ENCODE measurements at regions of chr1 and their contacts with region 1.

Region 1: DNA sequence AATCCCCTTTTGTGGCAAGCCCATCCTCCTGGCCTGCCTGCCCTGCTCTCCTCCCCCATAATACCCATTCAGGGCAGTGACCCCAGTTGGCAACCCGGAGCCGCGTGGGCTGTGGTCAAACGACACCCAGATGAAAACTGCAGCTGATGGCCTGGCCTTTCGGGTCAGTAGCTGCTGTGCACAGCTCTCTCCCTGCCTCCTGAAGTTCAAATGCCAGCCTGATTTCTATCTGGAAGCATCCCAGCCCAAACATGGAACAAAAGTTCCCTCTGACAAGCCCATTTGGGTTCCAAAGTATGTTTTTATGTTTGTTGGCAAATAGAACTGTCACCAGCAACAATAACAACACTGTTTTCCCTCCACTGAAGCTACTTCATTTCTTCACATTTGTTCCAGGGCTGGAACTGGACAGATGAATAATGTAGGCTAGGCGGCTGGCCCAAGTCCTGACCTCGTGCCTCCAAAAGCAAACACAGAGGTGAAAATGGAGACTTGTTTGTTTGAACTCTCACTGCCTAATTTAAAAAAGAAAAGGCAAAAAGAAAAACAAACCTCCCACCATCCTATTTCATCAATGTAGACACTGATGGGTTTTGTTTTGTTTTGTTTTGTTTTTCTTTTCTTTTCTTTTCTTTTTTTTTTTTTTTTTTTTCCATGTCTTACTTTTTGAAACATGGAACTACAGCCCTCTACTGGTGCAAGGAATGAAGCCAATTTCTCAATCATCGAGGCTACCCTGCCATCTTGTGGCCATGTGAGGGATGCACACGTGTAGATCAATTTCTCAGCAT is 179.0 kb downstream of the ADSS2 start:
- DNase-seq: peak; percentile 42 to 87 (median 71)
- ATAC-seq: peak; percentile 97
- H3K4me3 ChIP-seq: no peak overlapping the region
- H3K4me3 Mint-ChIP-seq: no peak overlapping the region
- H3K27ac ChIP-seq: no peak overlapping the region
- H3K27ac Mint-ChIP-seq: no peak overlapping the region
- H3K4me1 ChIP-seq: no peaks in the 10 kb centered on the region
- H3K4me1 Mint-ChIP-seq: peaks cover 12% of the 10 kb centered on the region
- H3K27me3 ChIP-seq: no peaks in the 10 kb centered on the region
- H3K27me3 Mint-ChIP-seq: no peaks in the 10 kb centered on the region
- CTCF ChIP-seq: peak; percentile 100

Region 2: DNA sequence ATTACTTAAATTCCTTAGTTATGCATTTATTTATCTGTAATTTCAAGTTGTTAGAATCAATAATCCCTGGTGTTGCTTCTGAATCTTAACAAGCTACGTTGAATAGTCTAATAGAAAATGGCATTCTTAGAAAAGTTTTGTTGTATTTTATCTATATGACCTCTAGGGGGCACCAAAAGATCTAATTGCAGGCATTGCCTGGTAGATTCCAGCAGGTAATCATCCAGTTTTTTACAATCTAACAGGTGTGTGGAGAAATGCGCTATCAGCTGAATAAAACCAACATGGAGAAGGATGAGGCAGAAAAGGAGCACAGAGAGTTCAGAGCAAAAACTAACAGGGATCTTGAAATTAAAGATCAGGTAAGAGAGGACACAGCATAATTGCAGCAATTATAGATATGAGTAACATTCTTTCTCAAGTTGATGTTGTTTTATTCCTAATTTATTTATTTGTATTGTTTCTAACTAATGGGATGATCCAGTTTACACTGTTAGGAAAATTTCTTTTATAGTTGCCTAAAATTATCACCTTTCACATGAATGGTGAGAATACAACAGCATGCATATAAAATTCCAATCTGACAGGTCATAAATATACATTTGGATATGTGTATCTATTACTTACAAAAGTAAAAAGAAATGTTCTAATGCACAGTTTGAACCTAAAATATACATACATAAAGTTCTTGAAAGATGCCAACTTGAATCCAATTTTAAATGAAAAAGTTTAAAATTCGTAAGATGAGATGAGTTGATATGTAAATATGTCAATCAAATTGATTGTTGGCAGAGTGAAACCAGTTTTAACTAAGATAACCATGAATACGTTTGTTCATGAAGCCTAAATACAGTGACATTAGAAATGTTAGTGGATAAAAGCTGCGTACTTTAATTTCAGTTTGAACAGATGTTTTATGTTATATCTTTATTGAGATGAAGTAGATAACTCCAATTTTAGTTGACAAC is 928.4 kb before region 1 on chr1:
- CTCF ChIA-PET with region 1: interaction called, 42 read pairs
- POLR2A ChIA-PET with region 1: interaction called, 4 read pairs
- intact Hi-C with region 1: loop called (anchors 1 kb)
- DNase-seq: peak in 2 of 9 experiments; percentile 47 to 66
- ATAC-seq: peak; percentile 49
- H3K4me3 ChIP-seq: no peak overlapping the region
- H3K4me3 Mint-ChIP-seq: no peak overlapping the region
- H3K27ac ChIP-seq: no peak overlapping the region
- H3K27ac Mint-ChIP-seq: no peak overlapping the region
- H3K4me1 ChIP-seq: no peaks in the 10 kb centered on the region
- H3K4me1 Mint-ChIP-seq: no peaks in the 10 kb centered on the region
- H3K27me3 ChIP-seq: no peaks in the 10 kb centered on the region
- H3K27me3 Mint-ChIP-seq: no peaks in the 10 kb centered on the region
- CTCF ChIP-seq: peak; percentile 90

Region 3: GRCh38 chr1:243748706-243749283 is 523.9 kb before region 1 on chr1:
- CTCF ChIA-PET with region 1: no interaction called
- POLR2A ChIA-PET with region 1: no interaction called
- intact Hi-C with region 1: loop called in 1 of 2 experiments (anchors 2 kb)
- DNase-seq: peak in 3 of 9 experiments; percentile 29 to 79 (median 72)
- ATAC-seq: peak; percentile 99
- H3K4me3 ChIP-seq: no peak overlapping the region
- H3K4me3 Mint-ChIP-seq: no peak overlapping the region
- H3K27ac ChIP-seq: no peak overlapping the region
- H3K27ac Mint-ChIP-seq: no peak overlapping the region
- H3K4me1 ChIP-seq: peaks cover 8% of the 10 kb centered on the region
- H3K4me1 Mint-ChIP-seq: peaks cover 32% of the 10 kb centered on the region
- H3K27me3 ChIP-seq: no peaks in the 10 kb centered on the region
- H3K27me3 Mint-ChIP-seq: no peaks in the 10 kb centered on the region
- CTCF ChIP-seq: peak; percentile 93

Region 4: DNA sequence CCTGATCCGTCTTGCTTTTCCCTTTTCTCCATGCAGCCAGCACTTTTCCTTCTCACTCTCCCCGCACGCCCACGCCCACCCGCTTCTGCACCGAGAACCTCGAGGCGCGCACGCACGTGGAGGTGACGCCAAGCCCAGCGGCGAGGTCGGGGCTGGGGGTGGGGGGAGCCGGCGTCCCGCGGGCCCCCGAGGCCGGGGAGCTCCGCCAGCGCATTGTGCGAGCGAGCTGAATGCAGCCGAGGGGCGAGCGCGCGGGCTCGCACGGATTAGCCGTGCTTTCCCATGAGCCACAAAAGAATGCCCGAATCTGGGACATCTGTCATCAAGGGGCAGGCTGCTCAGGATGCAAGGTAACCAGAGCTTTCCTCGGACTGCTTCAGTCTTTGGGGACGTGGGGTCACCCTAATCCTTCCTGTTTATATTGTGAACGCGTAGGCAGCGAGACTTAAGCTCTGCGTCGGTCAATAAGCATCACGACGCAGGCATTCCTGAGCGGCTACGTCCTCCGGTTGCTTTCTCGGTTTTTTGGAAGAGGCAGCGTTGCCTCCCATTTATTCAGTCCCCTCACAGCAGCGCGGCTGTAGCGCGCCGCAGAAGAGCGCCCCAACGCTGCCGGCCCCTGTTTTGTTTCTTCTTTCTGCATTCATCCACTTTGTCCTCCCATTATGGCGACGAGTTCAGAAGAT is 355.3 kb before region 1 on chr1:
- CTCF ChIA-PET with region 1: no interaction called
- POLR2A ChIA-PET with region 1: no interaction called
- intact Hi-C with region 1: loop called in 1 of 2 experiments (anchors 2 kb)
- DNase-seq: peak in 4 of 9 experiments; percentile 16 to 30 (median 24)
- ATAC-seq: peak; percentile 34
- H3K4me3 ChIP-seq: peak overlapping the region; percentile 37 to 63
- H3K4me3 Mint-ChIP-seq: peak overlapping the region; percentile 84
- H3K27ac ChIP-seq: no peak overlapping the region
- H3K27ac Mint-ChIP-seq: no peak overlapping the region
- H3K4me1 ChIP-seq: peaks cover 16% of the 10 kb centered on the region
- H3K4me1 Mint-ChIP-seq: peaks cover 16% of the 10 kb centered on the region
- H3K27me3 ChIP-seq: peaks cover 8 to 9% of the 10 kb centered on the region in 2 experiments
- H3K27me3 Mint-ChIP-seq: peaks cover 57% of the 10 kb centered on the region
- CTCF ChIP-seq: no peak

Region 5: DNA sequence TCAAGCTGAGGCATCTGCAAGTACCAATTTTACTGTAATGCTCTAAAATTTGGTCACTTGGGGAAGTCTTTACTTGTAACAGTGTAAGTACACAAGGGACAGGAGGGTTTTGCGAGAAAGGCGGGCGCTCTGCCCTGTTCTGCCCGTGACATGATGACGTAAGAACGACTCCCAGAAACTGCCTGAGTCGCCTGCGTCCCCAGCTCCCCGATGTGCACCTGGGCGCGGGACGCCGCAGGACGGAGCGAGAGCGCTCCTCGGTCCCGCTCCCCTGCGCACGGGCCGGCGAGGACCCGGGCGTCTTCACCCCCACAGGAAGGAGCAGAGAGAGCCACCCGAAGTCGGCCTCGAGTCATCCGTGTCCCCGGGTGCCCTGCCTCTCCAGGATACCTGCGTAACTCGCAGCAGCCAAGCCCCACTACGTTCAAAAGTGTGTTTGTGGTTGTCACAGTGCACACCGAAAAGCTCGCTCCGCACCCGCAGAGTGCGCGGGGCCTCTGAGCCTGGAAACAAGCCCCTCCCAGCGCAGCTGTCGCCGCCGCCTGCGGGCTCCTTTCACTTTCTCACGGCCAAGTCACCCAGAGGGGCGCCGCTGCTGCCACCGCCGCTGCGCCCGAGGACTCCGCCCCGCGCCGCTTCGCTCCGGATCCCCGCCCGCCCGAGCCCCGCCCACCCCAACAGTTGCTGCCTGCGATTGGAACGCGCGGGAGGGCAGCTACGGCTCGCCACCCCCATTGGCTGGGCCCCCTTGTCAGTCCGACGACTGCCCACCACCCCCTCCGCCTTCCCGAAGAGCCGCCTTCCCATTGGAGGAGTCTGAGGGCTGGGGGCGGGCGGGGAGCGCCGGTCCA is 224.8 kb before region 1 on chr1:
- CTCF ChIA-PET with region 1: interaction called, 4 read pairs
- POLR2A ChIA-PET with region 1: interaction called, 3 read pairs
- intact Hi-C with region 1: loop called in 1 of 2 experiments (anchors 2 kb)
- DNase-seq: peak; percentile 95 to 99 (median 97)
- ATAC-seq: peak; percentile 72
- H3K4me3 ChIP-seq: peak overlapping the region; percentile 83
- H3K4me3 Mint-ChIP-seq: peak overlapping the region; percentile 89
- H3K27ac ChIP-seq: peak overlapping the region; percentile 95 to 97
- H3K27ac Mint-ChIP-seq: peak overlapping the region; percentile 98
- H3K4me1 ChIP-seq: peaks cover 40% of the 10 kb centered on the region
- H3K4me1 Mint-ChIP-seq: peaks cover 26% of the 10 kb centered on the region
- H3K27me3 ChIP-seq: no peaks in the 10 kb centered on the region
- H3K27me3 Mint-ChIP-seq: no peaks in the 10 kb centered on the region
- CTCF ChIP-seq: no peak

Region 6: DNA sequence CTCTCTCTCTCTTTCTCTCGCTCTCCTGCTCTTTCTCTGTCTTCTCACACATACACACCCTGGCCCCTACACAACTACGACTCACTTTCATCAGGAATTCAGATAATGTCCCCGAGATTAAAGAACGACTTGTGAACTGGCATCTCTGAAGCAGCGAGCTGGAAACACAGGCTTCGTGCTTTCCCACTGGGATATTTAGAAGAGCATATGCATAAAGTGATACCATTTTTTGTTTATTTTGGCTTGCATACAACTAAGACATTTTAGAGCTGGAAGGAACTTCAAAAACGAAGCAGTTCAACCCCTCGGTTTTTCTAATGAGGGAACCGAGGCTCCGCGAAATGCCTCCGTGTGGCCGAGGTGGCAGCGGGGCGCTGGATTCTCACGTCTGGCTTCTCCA is 133.0 kb before region 1 on chr1:
- CTCF ChIA-PET with region 1: no interaction called
- POLR2A ChIA-PET with region 1: no interaction called
- intact Hi-C with region 1: loop called in 1 of 2 experiments (anchors 10 kb)
- DNase-seq: no peak
- ATAC-seq: no peak
- H3K4me3 ChIP-seq: no peak overlapping the region
- H3K4me3 Mint-ChIP-seq: no peak overlapping the region
- H3K27ac ChIP-seq: no peak overlapping the region
- H3K27ac Mint-ChIP-seq: no peak overlapping the region
- H3K4me1 ChIP-seq: no peaks in the 10 kb centered on the region
- H3K4me1 Mint-ChIP-seq: peaks cover 10% of the 10 kb centered on the region
- H3K27me3 ChIP-seq: peaks cover 0 to 3% of the 10 kb centered on the region in 2 experiments
- H3K27me3 Mint-ChIP-seq: peaks cover 14% of the 10 kb centered on the region
- CTCF ChIP-seq: no peak

Region 7: DNA sequence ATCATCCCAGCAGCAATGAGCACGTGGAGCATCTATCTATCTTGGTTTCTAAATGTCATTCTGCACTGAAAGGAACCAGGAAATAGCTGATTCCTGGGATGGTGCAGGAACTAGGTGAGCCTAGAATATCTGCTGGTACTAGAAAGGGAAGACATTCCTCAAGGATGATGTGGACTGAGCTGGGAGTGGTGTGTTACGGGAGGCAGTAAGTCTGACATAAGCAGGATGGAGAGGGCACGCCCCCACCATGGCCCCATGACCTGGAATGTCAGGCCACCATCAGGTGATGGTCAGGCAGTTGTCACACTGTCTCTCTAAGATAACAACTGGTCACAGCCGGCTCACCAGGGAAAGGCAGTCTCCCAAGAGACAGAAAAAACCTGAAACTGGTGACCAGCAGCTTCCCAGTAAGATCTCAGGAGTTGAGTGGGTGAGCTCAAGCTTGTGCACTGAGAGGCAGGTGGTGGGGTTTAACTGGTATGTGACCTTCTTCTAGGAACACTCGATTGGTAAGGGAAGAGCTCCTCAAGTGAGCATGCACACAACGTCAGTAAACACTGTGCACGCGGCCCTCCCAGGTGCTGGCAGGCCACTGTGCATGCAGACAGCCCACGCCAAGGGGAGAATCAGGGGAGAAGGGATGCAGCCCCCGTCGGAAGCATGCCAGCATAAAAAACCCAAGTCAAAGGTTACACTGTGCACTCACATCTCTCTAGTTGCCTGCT is 30.4 kb after region 1 on chr1:
- CTCF ChIA-PET with region 1: interaction called, 18 read pairs
- POLR2A ChIA-PET with region 1: no interaction called
- intact Hi-C with region 1: loop called (anchors 1 kb)
- DNase-seq: no peak
- ATAC-seq: no peak
- H3K4me3 ChIP-seq: no peak overlapping the region
- H3K4me3 Mint-ChIP-seq: no peak overlapping the region
- H3K27ac ChIP-seq: no peak overlapping the region
- H3K27ac Mint-ChIP-seq: no peak overlapping the region
- H3K4me1 ChIP-seq: peaks cover 4% of the 10 kb centered on the region
- H3K4me1 Mint-ChIP-seq: peaks cover 8% of the 10 kb centered on the region
- H3K27me3 ChIP-seq: no peaks in the 10 kb centered on the region
- H3K27me3 Mint-ChIP-seq: no peaks in the 10 kb centered on the region
- CTCF ChIP-seq: no peak